ENCODE measurements at regions of chr4 and their contacts with region 1.

Region 1: DNA sequence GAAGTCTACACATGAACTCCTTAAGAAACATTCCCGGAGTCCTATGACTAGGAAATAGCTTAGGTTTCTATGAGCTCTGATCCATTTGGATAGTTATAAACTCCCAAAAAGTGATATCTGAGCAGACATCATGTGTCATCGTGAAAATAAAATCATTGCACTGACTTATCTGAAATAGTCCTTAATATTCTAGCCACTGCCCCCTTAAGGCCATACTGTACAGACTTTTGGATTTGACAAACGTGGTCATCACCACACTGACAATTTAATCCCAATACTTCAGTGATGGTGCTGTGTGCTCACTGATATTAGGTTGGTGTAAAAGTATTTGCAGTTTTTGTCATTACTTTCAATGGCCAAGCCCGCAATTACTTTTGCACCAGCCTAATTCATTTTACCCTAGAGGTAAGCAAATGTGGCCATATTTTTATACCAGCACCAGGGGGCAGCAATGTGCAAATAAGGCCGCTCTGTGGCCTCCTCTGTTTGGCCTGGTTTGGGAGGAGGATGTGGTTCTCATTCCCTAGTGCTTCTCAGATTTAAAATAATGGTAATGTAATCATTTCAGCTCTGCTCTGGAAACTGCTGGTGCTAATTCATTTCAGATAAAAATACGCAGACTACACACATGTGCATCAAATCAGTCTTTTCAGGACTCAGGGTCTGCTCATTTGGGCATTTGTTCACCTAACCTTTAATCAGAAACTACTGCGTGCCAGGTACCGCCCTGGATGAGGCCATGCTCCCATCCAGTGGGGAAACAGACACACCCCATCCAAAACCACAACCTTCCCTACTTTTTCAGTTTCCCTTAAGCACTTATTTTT is 196.4 kb upstream of the C1QTNF7 start:
- DNase-seq: peak; percentile 57 to 86 (median 66)
- ATAC-seq: peak; percentile 87
- H3K4me3 ChIP-seq: no peak overlapping the region
- H3K4me3 Mint-ChIP-seq: no peak overlapping the region
- H3K27ac ChIP-seq: no peak overlapping the region
- H3K27ac Mint-ChIP-seq: no peak overlapping the region
- H3K4me1 ChIP-seq: peaks cover 20% of the 10 kb centered on the region
- H3K4me1 Mint-ChIP-seq: peaks cover 33% of the 10 kb centered on the region
- H3K27me3 ChIP-seq: no peaks in the 10 kb centered on the region
- H3K27me3 Mint-ChIP-seq: no peaks in the 10 kb centered on the region
- CTCF ChIP-seq: peak; percentile 92

Region 2: GRCh38 chr4:15314974-15315373 is 83.5 kb after region 1 on chr4:
- CTCF ChIA-PET with region 1: no interaction called
- POLR2A ChIA-PET with region 1: no interaction called
- intact Hi-C with region 1: no loop called
- DNase-seq: no peak
- ATAC-seq: no peak
- H3K4me3 ChIP-seq: no peak overlapping the region
- H3K4me3 Mint-ChIP-seq: no peak overlapping the region
- H3K27ac ChIP-seq: no peak overlapping the region
- H3K27ac Mint-ChIP-seq: no peak overlapping the region
- H3K4me1 ChIP-seq: no peaks in the 10 kb centered on the region
- H3K4me1 Mint-ChIP-seq: no peaks in the 10 kb centered on the region
- H3K27me3 ChIP-seq: no peaks in the 10 kb centered on the region
- H3K27me3 Mint-ChIP-seq: no peaks in the 10 kb centered on the region
- CTCF ChIP-seq: no peak

Region 3: DNA sequence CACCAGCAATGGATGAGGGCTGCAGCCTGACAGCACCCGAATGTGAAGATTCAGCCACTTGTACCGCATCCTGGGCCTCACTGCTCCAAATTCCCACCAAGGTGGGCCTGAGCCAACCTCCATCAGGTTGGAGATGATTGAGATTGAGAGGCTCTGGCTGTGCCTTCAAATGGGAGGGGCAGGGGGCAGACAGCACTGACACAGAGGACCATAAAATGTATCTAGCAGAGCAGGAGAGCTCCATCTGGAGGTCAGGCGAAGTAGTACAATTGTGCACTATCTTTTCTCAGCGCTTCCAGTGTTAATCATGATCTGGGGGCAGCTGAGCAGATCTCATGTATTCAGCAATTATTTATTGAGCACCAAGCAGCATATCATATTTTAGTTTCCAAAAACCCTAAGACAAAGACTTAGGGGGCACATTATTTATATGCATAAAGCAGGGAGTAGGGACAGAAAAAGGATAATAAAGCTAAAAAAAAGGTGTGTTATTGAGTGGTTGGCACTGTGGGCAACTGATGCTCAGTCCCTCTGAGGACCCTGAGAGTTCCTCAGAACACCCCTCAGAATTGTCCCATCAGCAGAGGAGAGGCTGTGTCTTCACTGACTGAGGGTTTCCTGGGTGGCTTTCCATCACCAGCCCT is 164.8 kb after region 1 on chr4:
- CTCF ChIA-PET with region 1: interaction called, 3 read pairs
- POLR2A ChIA-PET with region 1: interaction called, 4 read pairs
- intact Hi-C with region 1: loop called (anchors 2 kb)
- DNase-seq: peak; percentile 5 to 71 (median 38)
- ATAC-seq: peak; percentile 80
- H3K4me3 ChIP-seq: no peak overlapping the region
- H3K4me3 Mint-ChIP-seq: no peak overlapping the region
- H3K27ac ChIP-seq: no peak overlapping the region
- H3K27ac Mint-ChIP-seq: no peak overlapping the region
- H3K4me1 ChIP-seq: peaks cover 24% of the 10 kb centered on the region
- H3K4me1 Mint-ChIP-seq: peaks cover 35% of the 10 kb centered on the region
- H3K27me3 ChIP-seq: no peaks in the 10 kb centered on the region
- H3K27me3 Mint-ChIP-seq: no peaks in the 10 kb centered on the region
- CTCF ChIP-seq: peak; percentile 78

Region 4: GRCh38 chr4:15457406-15458201 is 226.1 kb after region 1 on chr4:
- CTCF ChIA-PET with region 1: no interaction called
- POLR2A ChIA-PET with region 1: interaction called, 7 read pairs
- intact Hi-C with region 1: loop called (anchors 1 to 2 kb)
- DNase-seq: peak in 3 of 14 experiments; percentile 51 to 62 (median 54)
- ATAC-seq: peak; percentile 59
- H3K4me3 ChIP-seq: no peak overlapping the region
- H3K4me3 Mint-ChIP-seq: no peak overlapping the region
- H3K27ac ChIP-seq: no peak overlapping the region
- H3K27ac Mint-ChIP-seq: no peak overlapping the region
- H3K4me1 ChIP-seq: no peaks in the 10 kb centered on the region
- H3K4me1 Mint-ChIP-seq: peaks cover 11% of the 10 kb centered on the region
- H3K27me3 ChIP-seq: no peaks in the 10 kb centered on the region
- H3K27me3 Mint-ChIP-seq: no peaks in the 10 kb centered on the region
- CTCF ChIP-seq: peak; percentile 80

Region 5: GRCh38 chr4:15649914-15650545 is 418.6 kb after region 1 on chr4:
- CTCF ChIA-PET with region 1: interaction called, 3 read pairs
- POLR2A ChIA-PET with region 1: interaction called, 3 read pairs
- intact Hi-C with region 1: loop called in 1 of 2 experiments (anchors 2 kb)
- DNase-seq: peak; percentile 23 to 88 (median 38)
- ATAC-seq: peak; percentile 79
- H3K4me3 ChIP-seq: no peak overlapping the region
- H3K4me3 Mint-ChIP-seq: peak overlapping the region; percentile 15
- H3K27ac ChIP-seq: no peak overlapping the region
- H3K27ac Mint-ChIP-seq: peak overlapping the region; percentile 7
- H3K4me1 ChIP-seq: peaks cover 26% of the 10 kb centered on the region
- H3K4me1 Mint-ChIP-seq: peaks cover 83% of the 10 kb centered on the region
- H3K27me3 ChIP-seq: no peaks in the 10 kb centered on the region
- H3K27me3 Mint-ChIP-seq: no peaks in the 10 kb centered on the region
- CTCF ChIP-seq: peak; percentile 82

Region 6: DNA sequence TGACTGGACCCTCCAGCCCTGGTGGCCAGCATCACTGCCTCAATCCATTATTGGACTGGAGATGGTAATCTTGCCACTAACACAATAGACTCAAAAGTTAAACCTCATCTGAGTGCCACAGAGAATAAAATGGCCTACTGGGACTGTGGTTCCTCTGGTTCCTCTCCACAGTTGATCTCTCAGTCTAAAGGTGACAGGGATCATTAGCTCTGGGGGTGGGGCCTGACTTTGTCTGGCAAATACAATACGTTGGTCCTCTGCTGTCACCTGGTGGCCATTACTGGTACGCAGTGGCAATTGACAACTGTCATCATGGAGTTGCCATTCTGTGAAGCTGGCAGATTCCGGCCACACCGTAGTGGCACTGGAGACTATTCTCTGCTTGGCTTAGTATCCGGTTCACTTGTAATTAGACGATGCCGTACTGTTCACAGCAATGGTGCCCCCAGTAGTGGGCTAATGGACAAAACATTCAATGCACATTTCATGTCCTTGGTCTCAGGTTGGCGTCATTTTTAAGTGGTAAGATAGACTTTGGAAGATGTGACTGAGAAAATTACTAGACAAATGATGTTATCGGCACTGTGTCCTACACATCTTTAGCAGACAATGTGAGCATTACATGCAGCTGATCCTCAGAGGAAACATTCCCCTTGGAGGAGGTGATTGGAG is 724.8 kb after region 1 on chr4:
- CTCF ChIA-PET with region 1: no interaction called
- POLR2A ChIA-PET with region 1: no interaction called
- intact Hi-C with region 1: loop called in 1 of 2 experiments (anchors 5 kb)
- DNase-seq: peak; percentile 51 to 83 (median 70)
- ATAC-seq: peak; percentile 96
- H3K4me3 ChIP-seq: no peak overlapping the region
- H3K4me3 Mint-ChIP-seq: no peak overlapping the region
- H3K27ac ChIP-seq: no peak overlapping the region
- H3K27ac Mint-ChIP-seq: no peak overlapping the region
- H3K4me1 ChIP-seq: no peaks in the 10 kb centered on the region
- H3K4me1 Mint-ChIP-seq: no peaks in the 10 kb centered on the region
- H3K27me3 ChIP-seq: no peaks in the 10 kb centered on the region
- H3K27me3 Mint-ChIP-seq: no peaks in the 10 kb centered on the region
- CTCF ChIP-seq: peak; percentile 78

Region 7: GRCh38 chr4:16001484-16001858 is 770.0 kb after region 1 on chr4:
- CTCF ChIA-PET with region 1: no interaction called
- POLR2A ChIA-PET with region 1: no interaction called
- intact Hi-C with region 1: loop called in 1 of 2 experiments (anchors 2 kb)
- DNase-seq: peak in 13 of 14 experiments; percentile 10 to 76 (median 29)
- ATAC-seq: peak; percentile 86
- H3K4me3 ChIP-seq: no peak overlapping the region
- H3K4me3 Mint-ChIP-seq: no peak overlapping the region
- H3K27ac ChIP-seq: no peak overlapping the region
- H3K27ac Mint-ChIP-seq: no peak overlapping the region
- H3K4me1 ChIP-seq: peaks cover 4% of the 10 kb centered on the region
- H3K4me1 Mint-ChIP-seq: no peaks in the 10 kb centered on the region
- H3K27me3 ChIP-seq: peaks cover 4 to 7% of the 10 kb centered on the region in 2 experiments
- H3K27me3 Mint-ChIP-seq: no peaks in the 10 kb centered on the region
- CTCF ChIP-seq: peak; percentile 69